ENCODE measurements at regions of chr7 and their contacts with region 1.

Region 1: GRCh38 chr7:99928994-99929729 is at the start of gene GJC3:
- DNase-seq: no peak
- H3K4me3 ChIP-seq: peak within 1 kb of the TSS; percentile 36
- CTCF ChIP-seq: peak; percentile 35

Region 2: DNA sequence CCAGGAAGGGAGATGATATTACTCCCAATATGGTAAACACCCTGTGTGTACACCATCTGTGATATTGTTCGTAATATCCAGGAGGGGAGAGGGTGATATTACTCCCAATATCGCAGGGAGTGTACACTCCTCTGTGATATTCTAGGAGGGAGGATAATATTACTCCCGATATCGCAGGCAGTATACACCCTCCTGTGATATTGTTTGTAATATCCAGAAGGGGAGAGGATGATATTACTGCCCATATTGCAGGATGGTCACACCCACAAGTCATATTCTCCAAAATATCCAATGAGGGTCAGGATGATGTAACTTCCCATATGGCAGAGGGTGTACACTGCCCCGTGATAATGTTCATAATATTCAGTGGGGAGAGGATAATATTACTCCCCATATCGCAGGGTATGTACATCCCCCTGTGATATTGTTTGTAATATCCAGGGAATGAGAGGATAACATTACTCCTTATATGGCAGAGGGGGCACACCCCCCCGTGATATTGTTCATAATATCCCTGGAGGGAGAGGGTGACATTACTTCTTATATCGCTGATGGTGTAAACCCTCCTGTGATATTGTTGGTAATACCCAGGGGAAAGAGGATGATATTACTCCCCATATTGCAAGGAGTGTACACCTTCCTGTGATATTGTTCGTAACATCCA is 29.5 kb after region 1 on chr7:
- CTCF ChIA-PET with region 1: no interaction called
- POLR2A ChIA-PET with region 1: no interaction called
- DNase-seq: no peak
- H3K4me3 ChIP-seq: no peak overlapping the region
- CTCF ChIP-seq: no peak

Region 3: GRCh38 chr7:99990460-99990852 is 61.3 kb after region 1 on chr7:
- CTCF ChIA-PET with region 1: interaction called, 13 read pairs
- POLR2A ChIA-PET with region 1: no interaction called
- DNase-seq: no peak
- H3K4me3 ChIP-seq: peak overlapping the region; percentile 38
- CTCF ChIP-seq: no peak